PC-9 (cell line): ENCODE measurements at regions of chr17 and their contacts with region 1.

Region 1: DNA sequence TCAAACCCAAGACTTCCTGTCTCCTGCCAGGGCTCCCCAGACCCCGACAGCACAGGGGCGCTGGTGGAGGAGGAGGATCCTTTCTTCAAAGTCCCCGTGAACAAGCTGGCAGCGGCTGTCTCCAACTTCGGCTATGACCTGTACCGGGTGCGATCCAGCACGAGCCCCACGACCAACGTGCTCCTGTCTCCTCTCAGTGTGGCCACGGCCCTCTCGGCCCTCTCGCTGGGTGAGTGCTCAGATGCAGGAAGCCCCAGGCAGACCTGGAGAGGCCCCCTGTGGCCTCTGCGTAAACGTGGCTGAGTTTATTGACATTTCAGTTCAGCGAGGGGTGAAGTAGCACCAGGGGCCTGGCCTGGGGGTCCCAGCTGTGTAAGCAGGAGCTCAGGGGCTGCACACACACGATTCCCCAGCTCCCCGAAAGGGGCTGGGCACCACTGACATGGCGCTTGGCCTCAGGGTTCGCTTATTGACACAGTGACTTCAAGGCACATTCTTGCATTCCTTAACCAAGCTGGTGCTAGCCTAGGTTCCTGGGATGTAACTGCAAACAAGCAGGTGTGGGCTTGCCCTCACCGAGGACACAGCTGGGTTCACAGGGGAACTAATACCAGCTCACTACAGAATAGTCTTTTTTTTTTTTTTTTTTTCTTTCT is 8.1 kb downstream of the SERPINF1 start:
- DNase-seq: peak; percentile 62 to 76
- H3K4me3 ChIP-seq: no peak overlapping the region
- H3K27ac ChIP-seq: no peak overlapping the region
- H3K4me1 ChIP-seq: peaks cover 6% of the 10 kb centered on the region; the same call in 1 of the 2 replicates
- H3K27me3 ChIP-seq: no peaks in the 10 kb centered on the region
- CTCF ChIP-seq: no peak

Region 2: GRCh38 chr17:1590031-1590748 is 179.8 kb before region 1 on chr17:
- CTCF ChIA-PET with region 1: no interaction called
- POLR2A ChIA-PET with region 1: no interaction called
- intact Hi-C with region 1: no loop called
- DNase-seq: peak; percentile 84 to 95
- H3K4me3 ChIP-seq: peak overlapping the region; percentile 19; the same call in 1 of the 2 replicates
- H3K27ac ChIP-seq: peak overlapping the region; percentile 30
- H3K4me1 ChIP-seq: peaks cover 24% of the 10 kb centered on the region
- H3K27me3 ChIP-seq: no peaks in the 10 kb centered on the region
- CTCF ChIP-seq: no peak

Region 3: GRCh38 chr17:1643293-1643998 is 126.5 kb before region 1 on chr17:
- CTCF ChIA-PET with region 1: no interaction called
- POLR2A ChIA-PET with region 1: interaction called, 10 read pairs
- intact Hi-C with region 1: no loop called
- DNase-seq: peak; percentile 72 to 89
- H3K4me3 ChIP-seq: peak overlapping the region; percentile 86
- H3K27ac ChIP-seq: no peak overlapping the region
- H3K4me1 ChIP-seq: peaks cover 24% of the 10 kb centered on the region
- H3K27me3 ChIP-seq: no peaks in the 10 kb centered on the region
- CTCF ChIP-seq: no peak; the same call in 1 of the 2 replicates

Region 4: DNA sequence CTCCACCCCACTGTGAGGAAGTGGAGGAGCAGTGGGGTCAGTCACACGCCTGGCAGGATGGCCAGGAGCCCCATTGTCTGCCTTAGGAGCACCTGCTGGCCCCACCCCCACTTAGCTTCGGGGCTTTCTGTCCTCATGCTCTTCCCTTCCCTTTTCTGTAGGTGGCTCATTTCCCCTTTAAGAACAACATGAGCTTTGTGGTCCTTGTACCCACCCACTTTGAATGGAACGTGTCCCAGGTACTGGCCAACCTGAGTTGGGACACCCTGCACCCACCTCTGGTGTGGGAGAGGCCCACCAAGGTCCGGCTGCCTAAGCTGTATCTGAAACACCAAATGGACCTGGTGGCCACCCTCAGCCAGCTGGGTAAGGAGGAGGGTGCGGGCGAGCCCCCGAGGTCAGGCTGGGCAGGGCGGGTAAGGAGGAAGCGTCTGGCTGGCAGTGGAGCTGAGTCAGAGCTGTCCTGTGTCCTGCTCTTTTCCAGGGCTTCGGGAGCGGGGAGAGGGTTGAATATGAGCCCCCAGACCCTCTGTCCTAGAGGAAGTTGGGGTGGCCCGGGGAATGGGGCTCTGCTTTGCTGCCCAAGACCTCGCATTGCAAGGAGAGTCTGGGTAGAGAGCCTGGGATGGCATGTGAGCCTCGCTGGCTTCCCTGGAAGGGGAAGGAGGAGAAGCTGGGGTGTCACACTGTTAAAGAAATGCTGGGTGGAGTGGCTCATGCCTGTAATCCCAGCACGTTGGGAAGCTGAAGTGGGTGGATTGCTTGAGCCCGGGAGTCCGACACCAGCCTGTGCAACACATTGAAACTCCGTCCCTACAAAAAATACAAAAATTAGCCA is 17.3 kb before region 1 on chr17:
- CTCF ChIA-PET with region 1: no interaction called
- POLR2A ChIA-PET with region 1: interaction called, 17 read pairs
- intact Hi-C with region 1: no loop called
- DNase-seq: peak; percentile 79 to 86
- H3K4me3 ChIP-seq: peak overlapping the region; percentile 60
- H3K27ac ChIP-seq: peak overlapping the region; percentile 67
- H3K4me1 ChIP-seq: peaks cover 28% of the 10 kb centered on the region
- H3K27me3 ChIP-seq: no peaks in the 10 kb centered on the region
- CTCF ChIP-seq: no peak; the same call in 1 of the 2 replicates

Region 5: GRCh38 chr17:1820528-1821252 is 50.7 kb after region 1 on chr17:
- CTCF ChIA-PET with region 1: no interaction called
- POLR2A ChIA-PET with region 1: no interaction called
- intact Hi-C with region 1: no loop called
- DNase-seq: no peak
- H3K4me3 ChIP-seq: no peak overlapping the region
- H3K27ac ChIP-seq: no peak overlapping the region
- H3K4me1 ChIP-seq: no peaks in the 10 kb centered on the region
- H3K27me3 ChIP-seq: no peaks in the 10 kb centered on the region
- CTCF ChIP-seq: no peak

Region 6: DNA sequence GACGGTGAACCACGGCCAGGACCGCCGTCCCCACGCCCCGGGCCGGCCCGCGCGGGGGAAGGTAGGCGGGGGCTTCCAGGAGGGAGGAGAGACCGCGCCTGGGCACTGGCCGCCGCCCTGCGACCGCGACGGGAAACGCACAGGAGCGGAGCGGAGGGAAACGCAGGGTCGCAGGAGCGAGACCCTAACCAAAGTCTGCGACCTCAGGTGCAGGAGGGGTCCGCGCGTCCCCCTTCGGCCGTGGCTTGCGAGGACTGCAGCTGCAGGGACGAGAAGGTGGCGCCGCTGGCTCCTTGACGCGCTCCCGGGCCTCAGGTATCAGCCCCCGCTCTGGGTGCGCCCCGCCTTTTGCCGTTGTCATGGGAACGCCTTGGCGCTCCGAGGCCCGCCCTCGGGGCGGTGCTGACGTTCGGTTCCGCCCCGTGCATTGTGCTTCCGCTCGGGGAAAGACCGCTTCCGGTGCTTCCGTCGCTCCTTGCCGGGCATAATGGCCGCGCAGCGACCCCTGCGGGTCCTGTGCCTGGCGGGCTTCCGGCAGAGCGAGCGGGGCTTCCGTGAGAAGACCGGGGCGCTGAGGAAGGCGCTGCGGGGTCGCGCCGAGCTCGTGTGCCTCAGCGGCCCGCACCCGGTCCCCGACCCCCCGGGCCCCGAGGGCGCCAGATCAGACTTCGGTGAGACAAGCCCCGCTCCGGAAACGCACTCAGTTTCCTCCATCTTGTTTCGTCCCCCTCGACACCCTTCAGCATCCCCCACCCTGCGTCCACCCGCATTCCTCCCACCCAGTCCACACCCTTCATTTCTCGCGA is 271.8 kb after region 1 on chr17 and contains the start of gene OVCA2:
- CTCF ChIA-PET with region 1: no interaction called
- POLR2A ChIA-PET with region 1: interaction called, 13 read pairs
- intact Hi-C with region 1: no loop called
- DNase-seq: peak; percentile 82 to 98
- H3K4me3 ChIP-seq: peak within 1 kb of the TSS; percentile 93
- H3K27ac ChIP-seq: peak within 1 kb of the TSS; percentile 73
- H3K4me1 ChIP-seq: peaks cover 35% of the 10 kb centered on the region
- H3K27me3 ChIP-seq: no peaks in the 10 kb centered on the region
- CTCF ChIP-seq: peak; percentile 49
- total RNA-seq, gene OVCA2: 34.4 and 35.4 TPM in 2 replicates

Region 7: GRCh38 chr17:2198927-2199326 is 429.0 kb after region 1 on chr17:
- CTCF ChIA-PET with region 1: no interaction called
- POLR2A ChIA-PET with region 1: interaction called, 20 read pairs
- intact Hi-C with region 1: no loop called
- DNase-seq: no peak
- H3K4me3 ChIP-seq: no peak overlapping the region
- H3K27ac ChIP-seq: no peak overlapping the region
- H3K4me1 ChIP-seq: peaks cover 19% of the 10 kb centered on the region
- H3K27me3 ChIP-seq: no peaks in the 10 kb centered on the region
- CTCF ChIP-seq: no peak